ENCODE measurements at regions of chr2 and their contacts with region 1.

Region 1: DNA sequence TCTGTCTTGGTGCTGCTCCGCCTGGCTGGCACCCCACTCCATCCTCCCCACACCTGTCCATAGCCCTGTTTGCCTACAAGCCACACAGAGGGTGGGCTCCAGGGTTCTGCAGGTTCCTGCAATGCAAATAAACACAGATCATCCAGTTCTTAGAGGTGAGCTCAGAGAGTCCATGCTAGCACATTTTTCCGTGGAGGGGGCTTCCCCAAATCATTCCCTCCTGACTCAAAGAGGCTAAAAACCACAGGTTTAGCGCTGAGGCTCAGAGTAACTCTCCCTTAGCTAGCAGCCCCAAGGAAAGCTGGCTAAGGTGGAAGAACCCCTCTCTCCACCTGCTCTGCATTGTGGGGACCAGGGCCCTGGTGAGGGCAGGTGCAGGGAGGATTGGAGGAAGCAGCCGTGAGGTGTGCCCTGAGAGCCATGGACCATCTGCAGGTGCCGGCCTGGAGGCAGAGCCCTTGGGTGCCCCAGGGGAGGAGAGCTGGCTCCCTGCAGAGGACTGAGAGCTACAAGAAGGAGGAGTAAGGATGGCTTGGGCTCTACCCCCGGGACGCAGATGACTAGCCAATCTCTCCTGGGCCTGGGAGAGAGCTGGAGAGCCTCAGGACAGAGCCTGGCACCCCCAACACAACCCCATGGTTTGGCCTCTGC is 23.8 kb upstream of the TEX44 start:
- DNase-seq: no peak
- ATAC-seq: peak; percentile 15

Region 2: DNA sequence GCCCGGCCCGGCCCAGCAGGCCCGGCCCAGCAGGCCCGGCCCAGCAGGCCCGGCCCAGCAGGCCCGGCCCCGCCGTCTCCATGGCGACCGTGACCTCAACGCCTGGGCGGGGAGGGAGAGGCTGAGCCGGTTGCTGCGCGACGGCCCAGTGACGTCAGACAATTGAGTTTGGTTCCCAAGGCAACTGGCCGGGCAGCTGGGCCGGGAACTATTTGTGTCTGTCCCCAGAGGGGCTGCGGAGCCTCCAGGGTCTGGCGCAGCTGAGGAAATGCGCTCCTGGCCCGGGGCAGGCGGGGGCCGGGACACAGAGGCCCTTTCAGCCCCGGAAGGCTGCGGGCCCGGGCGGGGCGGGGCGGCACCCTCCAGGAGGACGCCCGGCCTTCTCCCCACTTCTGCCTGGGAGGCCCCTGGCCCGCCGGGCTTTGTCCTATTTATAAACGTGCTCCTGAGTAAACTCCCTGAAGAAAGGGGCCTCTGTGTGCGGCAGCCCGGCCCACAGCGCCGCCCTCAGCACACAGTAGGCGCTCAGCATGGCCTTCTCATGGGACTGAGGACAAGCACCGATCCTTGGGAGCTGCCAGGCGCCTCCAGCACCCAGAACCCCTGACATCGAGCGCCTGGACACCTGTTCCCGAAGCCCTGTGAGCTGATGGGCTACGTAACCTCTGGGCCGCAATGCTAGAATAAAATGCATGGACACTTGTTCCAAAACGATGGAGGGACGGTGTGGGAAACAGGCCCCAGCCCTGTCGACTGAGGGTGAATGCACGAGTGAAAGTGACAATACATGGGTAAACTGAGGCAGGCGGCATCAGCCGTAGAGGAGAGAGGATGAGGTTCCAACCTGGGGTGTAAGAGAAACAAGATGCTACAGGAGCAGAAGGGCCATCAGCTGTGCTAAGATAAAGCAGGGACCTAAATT is 36.0 kb after region 1 on chr2:
- intact Hi-C with region 1: loop called (anchors 5 kb)
- DNase-seq: peak; percentile 100
- ATAC-seq: peak; percentile 93

Region 3: GRCh38 chr2:232857158-232857563 is 1288.3 kb after region 1 on chr2:
- intact Hi-C with region 1: no loop called
- DNase-seq: no peak
- ATAC-seq: no peak